ENCODE measurements at regions of chr10 and their contacts with region 1.

Region 1: DNA sequence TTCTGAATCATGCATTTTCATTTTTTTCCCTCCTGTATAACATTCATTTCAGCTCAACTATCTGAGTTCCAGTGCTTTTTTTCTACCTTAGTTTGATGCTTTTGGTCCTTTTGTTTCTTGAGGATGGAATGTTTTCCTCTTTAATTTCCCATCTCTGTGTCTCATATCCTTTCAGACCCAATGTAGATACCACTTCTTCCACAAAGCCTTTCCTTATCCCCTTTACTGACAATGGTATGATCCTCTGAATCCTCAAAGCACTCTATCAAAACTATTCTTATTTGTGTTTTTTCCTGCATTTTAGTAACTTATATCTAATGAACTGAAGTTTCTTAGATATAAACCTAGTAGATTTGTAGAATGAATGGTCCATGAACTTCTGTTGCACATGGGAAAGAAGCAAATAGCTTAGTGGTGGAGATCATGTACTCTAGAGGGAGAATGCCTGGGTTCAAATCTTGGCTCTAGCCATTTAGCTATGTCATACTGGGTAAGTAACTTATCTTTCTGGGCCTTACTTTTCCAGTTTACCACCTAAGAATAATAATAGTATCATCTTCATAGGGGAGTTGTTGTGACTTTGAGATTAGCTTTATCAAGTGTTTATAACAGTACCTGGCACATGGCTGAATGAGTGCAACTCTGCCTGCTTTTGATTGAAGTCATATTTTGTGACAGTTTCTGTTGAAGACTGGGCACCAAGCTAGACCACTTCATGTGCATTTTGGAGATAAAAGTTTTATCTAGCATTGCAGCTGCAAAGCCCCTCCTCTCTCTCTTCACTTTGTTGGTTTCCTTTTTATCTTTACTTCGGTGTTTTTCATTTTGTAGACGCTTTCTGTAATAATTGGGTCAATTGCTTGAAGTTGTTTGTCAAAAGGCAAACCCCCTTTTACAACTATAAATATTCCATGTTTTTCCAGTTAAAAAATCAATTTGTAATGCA is 18.5 kb downstream of the STAM start:
- DNase-seq: no peak
- ATAC-seq: no peak
- H3K4me3 Mint-ChIP-seq: no peak overlapping the region
- H3K27ac Mint-ChIP-seq: no peak overlapping the region
- H3K4me1 Mint-ChIP-seq: peaks cover 21% of the 10 kb centered on the region
- H3K27me3 Mint-ChIP-seq: no peaks in the 10 kb centered on the region

Region 2: GRCh38 chr10:17673456-17674061 is 11.1 kb after region 1 on chr10:
- CTCF ChIA-PET with region 1: interaction called, 12 read pairs
- POLR2A ChIA-PET with region 1: interaction called, 3 read pairs
- DNase-seq: no peak
- ATAC-seq: no peak
- H3K4me3 Mint-ChIP-seq: no peak overlapping the region
- H3K27ac Mint-ChIP-seq: peak overlapping the region; percentile 12
- H3K4me1 Mint-ChIP-seq: peaks cover 38% of the 10 kb centered on the region
- H3K27me3 Mint-ChIP-seq: no peaks in the 10 kb centered on the region